Adrenal gland (tissue), 19 donors: ENCODE measurements at regions of chr14 and their contacts with region 1.

Region 1: GRCh38 chr14:60656686-60657455 is 7.6 kb upstream of the SIX1 start:
- DNase-seq: peak; percentile 53 to 70 (median 63)
- H3K4me3 ChIP-seq: peak overlapping the region in 2 of 4 donors; percentile 75 to 80
- H3K27ac ChIP-seq: peak overlapping the region in 3 of 5 donors; percentile 17 to 34 (median 19)
- H3K4me1 ChIP-seq: peaks cover 6 to 19% of the 10 kb centered on the region in 2 donors
- H3K27me3 ChIP-seq: peaks cover 38% of the 10 kb centered on the region
- CTCF ChIP-seq: peak; percentile 24 to 51 (median 36)
- POLR2A ChIP-seq: no peak

Region 2: GRCh38 chr14:60514741-60515491 is 142.0 kb before region 1 on chr14:
- intact Hi-C with region 1: no loop called
- DNase-seq: peak in 2 of 7 donors; percentile 14 to 17
- H3K4me3 ChIP-seq: peak overlapping the region in 1 of 4 donors; percentile 50
- H3K27ac ChIP-seq: no peak overlapping the region
- H3K4me1 ChIP-seq: peaks cover 8 to 22% of the 10 kb centered on the region in 2 donors
- H3K27me3 ChIP-seq: peaks cover 72% of the 10 kb centered on the region
- CTCF ChIP-seq: peak in 3 of 6 experiments; percentile 5 to 31 (median 20)
- POLR2A ChIP-seq: no peak

Region 3: GRCh38 chr14:60945984-60946383 is 289.1 kb after region 1 on chr14:
- intact Hi-C with region 1: no loop called
- DNase-seq: no peak
- H3K4me3 ChIP-seq: no peak overlapping the region
- H3K27ac ChIP-seq: no peak overlapping the region
- H3K4me1 ChIP-seq: peaks cover 0 to 16% of the 10 kb centered on the region in 2 donors
- H3K27me3 ChIP-seq: no peaks in the 10 kb centered on the region
- CTCF ChIP-seq: no peak
- POLR2A ChIP-seq: no peak

Region 4: DNA sequence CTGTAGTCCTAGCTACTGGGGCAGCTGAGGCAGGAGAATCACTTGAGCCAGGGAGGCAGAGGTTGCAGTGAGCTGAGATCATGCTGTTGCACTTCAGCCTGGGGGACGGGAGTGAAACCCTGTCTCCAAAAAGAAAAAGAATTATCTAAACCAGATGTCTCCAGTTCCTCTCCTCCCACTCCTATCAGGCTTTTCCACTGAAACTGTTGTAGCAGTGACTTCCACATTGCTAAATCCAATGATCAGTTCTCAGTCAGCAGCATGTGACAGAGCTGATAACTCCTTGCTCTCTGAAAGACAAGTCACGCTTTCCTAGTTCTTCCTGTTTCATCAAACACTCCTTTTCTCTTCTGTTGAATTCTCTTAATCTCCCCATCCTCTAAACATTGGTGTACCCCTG is 332.7 kb after region 1 on chr14:
- intact Hi-C with region 1: no loop called
- DNase-seq: peak in 1 of 7 donors; percentile 2
- H3K4me3 ChIP-seq: no peak overlapping the region
- H3K27ac ChIP-seq: no peak overlapping the region
- H3K4me1 ChIP-seq: no peaks in the 10 kb centered on the region
- H3K27me3 ChIP-seq: no peaks in the 10 kb centered on the region
- CTCF ChIP-seq: no peak
- POLR2A ChIP-seq: no peak

Region 5: GRCh38 chr14:61188978-61189808 is 532.3 kb after region 1 on chr14:
- intact Hi-C with region 1: loop called in 1 of 2 experiments (anchors 10 kb)
- DNase-seq: peak; percentile 59 to 69 (median 62)
- H3K4me3 ChIP-seq: peak overlapping the region in 2 of 4 donors; percentile 16 to 45
- H3K27ac ChIP-seq: peak overlapping the region in 3 of 5 donors; percentile 40 to 44 (median 41)
- H3K4me1 ChIP-seq: no peaks in the 10 kb centered on the region
- H3K27me3 ChIP-seq: no peaks in the 10 kb centered on the region
- CTCF ChIP-seq: peak; percentile 39 to 60 (median 48)
- POLR2A ChIP-seq: no peak